Heart left ventricle (tissue), 16 donors: ENCODE measurements at regions of chr17 and their contacts with region 1.

Region 1: DNA sequence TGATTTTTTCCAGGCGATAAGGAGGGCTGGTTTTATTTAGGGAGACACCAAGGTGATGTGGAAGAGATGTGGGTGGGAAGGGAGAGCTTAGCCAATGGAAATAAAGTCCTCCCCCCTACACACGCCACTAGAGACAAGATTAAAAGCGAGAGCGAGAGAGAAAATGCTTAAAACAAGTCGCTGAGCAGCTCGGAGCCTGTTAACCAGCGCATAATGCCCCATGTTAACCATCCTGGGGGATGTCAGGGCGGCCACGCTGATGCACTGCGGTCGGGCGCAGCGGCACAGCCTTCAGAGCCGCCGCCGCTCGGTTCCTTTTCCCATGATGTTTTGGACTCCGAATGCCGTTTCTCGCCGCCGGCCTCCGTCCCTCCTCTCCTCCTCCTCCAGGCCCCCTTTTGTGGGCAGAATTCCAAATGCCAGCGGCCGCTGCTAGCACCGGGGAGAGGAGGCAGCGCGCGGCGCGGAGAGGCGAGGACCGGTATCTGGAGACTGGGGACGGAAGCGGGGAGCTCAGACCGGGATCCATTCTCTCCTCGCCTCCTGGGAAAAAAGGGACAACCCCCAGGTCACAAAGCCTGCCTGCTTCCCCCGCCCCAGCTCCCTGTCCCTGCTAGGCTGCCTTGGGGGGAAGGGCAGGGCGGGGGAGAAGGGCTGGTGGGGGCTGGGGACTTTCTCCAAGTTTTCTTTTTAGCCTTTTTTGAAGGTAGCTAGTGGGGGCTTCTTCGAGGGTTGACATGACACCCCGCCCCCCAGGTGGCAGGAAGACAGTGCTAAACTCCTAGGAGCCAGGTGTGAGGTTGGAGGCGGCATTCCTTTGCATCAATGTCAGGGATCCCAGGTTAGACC is 98.1 kb upstream of the CCL2 start:
- DNase-seq: peak in 1 of 5 donors; percentile 49
- ATAC-seq: no peak
- H3K4me3 ChIP-seq: peak overlapping the region in 2 of 12 donors; percentile 15 to 18
- H3K27ac ChIP-seq: no peak overlapping the region
- H3K4me1 ChIP-seq: peaks cover 0 to 10% (median 0%) of the 10 kb centered on the region in 12 donors
- H3K27me3 ChIP-seq: peaks cover 25 to 66% (median 45%) of the 10 kb centered on the region in 9 donors
- CTCF ChIP-seq: no peak
- POLR2A ChIP-seq: no peak

Region 2: DNA sequence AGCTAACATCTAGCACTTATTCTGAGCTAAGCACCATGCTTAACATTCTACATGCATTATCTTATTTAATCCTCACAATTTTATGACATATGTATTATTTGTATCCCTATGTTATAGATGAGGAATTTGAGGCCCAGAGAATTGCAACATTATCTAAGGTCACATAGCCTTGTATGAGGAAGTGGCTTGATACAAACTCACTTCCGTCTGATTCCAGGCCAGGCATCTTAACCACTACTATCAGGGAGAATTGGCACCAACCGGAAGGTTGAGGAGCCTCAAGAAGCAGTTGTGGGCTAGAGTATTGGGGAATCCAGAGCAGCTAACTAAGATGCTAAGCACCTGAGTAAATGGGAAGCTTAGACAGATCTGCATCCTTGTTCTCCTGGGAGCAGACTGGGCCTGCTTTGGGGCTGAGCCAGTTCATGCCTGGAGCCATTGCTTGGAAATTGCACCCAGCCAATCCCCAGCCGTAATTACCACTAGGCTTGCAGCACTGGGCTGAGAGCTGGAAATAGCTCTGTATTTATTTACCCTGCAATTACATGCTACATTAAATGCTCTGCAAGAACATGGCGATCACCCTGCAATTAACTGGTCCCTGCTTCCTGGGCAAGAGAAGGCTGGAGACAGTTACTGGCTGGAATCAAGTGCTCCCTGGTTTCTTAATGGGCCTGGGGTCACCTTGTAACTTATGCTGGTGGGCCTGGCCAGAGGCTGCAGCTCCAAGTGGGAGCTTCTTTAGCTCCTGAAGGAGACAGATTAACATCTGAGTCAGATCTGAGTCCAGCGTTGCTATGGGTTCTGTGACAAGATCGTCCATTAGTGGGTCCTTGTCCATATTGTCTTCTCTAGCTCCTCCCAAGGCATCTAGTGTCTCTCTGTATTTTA is 175.0 kb before region 1 on chr17:
- intact Hi-C with region 1: no loop called
- DNase-seq: no peak
- ATAC-seq: peak in 1 of 4 donors; percentile 31
- H3K4me3 ChIP-seq: no peak overlapping the region
- H3K27ac ChIP-seq: no peak overlapping the region
- H3K4me1 ChIP-seq: peaks cover 0 to 35% (median 2%) of the 10 kb centered on the region in 12 donors
- H3K27me3 ChIP-seq: no peaks in the 10 kb centered on the region
- CTCF ChIP-seq: no peak
- POLR2A ChIP-seq: no peak

Region 3: DNA sequence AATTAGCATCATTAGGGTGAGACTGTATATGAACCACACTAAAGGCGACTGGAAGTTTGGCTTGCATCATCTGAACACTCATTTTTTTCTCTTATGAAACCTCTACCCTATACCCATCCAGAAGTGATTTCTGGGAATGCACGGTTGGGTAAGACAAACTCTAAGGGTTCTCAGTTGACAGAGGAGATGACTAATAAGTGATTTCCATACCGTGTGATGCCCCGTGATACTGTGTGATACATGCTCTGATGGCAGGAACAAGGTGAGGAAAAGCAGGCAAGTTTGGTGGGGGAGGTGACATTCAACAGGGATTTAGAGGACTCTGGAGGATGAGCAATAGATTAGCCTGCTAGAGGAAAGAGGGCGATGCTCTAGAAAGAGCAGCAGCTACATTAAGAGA is 58.3 kb before region 1 on chr17:
- intact Hi-C with region 1: loop called in 2 of 10 experiments (anchors 10 kb)
- DNase-seq: no peak
- ATAC-seq: no peak
- H3K4me3 ChIP-seq: no peak overlapping the region
- H3K27ac ChIP-seq: no peak overlapping the region
- H3K4me1 ChIP-seq: no peaks in the 10 kb centered on the region
- H3K27me3 ChIP-seq: peaks cover 0 to 18% (median 4%) of the 10 kb centered on the region in 9 donors
- CTCF ChIP-seq: no peak
- POLR2A ChIP-seq: no peak